ENCODE measurements at regions of chr11 and their contacts with region 1.

Region 1: GRCh38 chr11:119474682-119475596 is 52.0 kb upstream of the THY1 start:
- DNase-seq: peak; percentile 86
- H3K4me3 ChIP-seq: no peak overlapping the region; a peak in 1 of 4 replicates
- H3K27ac ChIP-seq: no peak overlapping the region
- H3K4me1 ChIP-seq: peaks cover 19 to 26% of the 10 kb centered on the region in 2 experiments; a peak in 3 of 4 replicates
- H3K27me3 ChIP-seq: 0 out of 2 replicates have a peak, but pooled peaks cover 6% of the 10 kb centered on the region
- CTCF ChIP-seq: peak; percentile 96
- EP300 ChIP-seq: no peak
- RAD21 ChIP-seq: peak; percentile 98

Region 2: GRCh38 chr11:118928108-118928870 is 546.6 kb before region 1 on chr11:
- CTCF ChIA-PET with region 1: no interaction called
- POLR2A ChIA-PET with region 1: no interaction called
- DNase-seq: peak; percentile 95
- H3K4me3 ChIP-seq: peak overlapping the region; percentile 80 to 99
- H3K27ac ChIP-seq: peak overlapping the region; percentile 91 to 93
- H3K4me1 ChIP-seq: peaks cover 9 to 33% of the 10 kb centered on the region in 2 experiments; a peak in 3 of 4 replicates
- H3K27me3 ChIP-seq: no peaks in the 10 kb centered on the region
- CTCF ChIP-seq: peak; percentile 94
- EP300 ChIP-seq: no peak
- RAD21 ChIP-seq: peak; percentile 75

Region 3: DNA sequence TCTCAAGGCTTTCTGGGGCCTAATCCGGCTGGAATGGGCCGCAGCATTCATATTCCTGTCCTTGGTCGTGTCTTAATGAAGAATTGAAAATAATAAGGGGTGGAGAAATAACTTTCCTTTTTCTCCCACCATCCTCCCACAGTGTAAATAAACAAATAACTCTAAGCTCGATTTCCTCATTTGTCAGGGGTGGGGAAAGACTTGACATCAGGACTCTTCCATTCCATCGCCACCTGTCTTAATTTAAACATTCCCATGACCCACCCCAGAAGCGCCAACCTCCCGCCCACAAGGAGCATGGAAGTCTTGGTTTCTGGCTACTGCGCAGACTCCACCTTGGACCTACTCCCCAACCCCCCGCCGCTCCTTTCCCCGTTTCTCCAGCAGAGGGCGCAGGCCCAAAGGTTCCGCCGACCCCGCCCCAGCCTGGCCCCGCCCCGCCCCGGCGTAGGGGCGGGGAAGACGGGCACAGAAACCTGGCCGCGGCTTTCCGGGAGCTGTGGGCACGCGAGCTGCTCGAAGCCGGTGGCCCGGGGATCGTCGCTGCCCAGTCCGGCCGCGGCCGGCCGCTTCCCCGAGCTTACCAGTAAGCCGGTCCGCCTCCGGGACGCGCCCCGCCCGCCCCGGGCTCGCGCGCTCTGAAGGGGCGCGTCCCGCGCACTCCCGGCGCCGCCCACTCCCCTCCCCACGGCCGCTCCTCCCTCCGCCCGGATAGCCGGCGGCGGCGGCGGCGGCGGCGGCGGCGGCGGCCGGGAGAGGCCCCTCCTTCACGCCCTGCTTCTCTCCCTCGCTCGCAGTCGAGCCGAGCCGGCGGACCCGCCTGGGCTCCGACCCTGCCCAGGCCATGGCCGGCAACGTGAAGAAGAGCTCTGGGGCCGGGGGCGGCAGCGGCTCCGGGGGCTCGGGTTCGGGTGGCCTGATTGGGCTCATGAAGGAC is 269.1 kb before region 1 on chr11 and contains the start of gene CBL:
- CTCF ChIA-PET with region 1: interaction called, 10 read pairs
- POLR2A ChIA-PET with region 1: no interaction called
- DNase-seq: peak; percentile 98
- H3K4me3 ChIP-seq: peak within 1 kb of the TSS; percentile 78 to 99
- H3K27ac ChIP-seq: peak within 1 kb of the TSS; percentile 90
- H3K4me1 ChIP-seq: peaks cover 5 to 7% of the 10 kb centered on the region in 2 experiments; a peak in 3 of 4 replicates
- H3K27me3 ChIP-seq: no peaks in the 10 kb centered on the region
- CTCF ChIP-seq: peak; percentile 78
- EP300 ChIP-seq: peak in 1 of 2 experiments; percentile 46; a peak in 1 of 4 replicates
- RAD21 ChIP-seq: peak; percentile 57
- polyA plus RNA-seq, gene CBL: 9.5 and 10.4 TPM in 2 replicates

Region 4: GRCh38 chr11:119356349-119357031 is 118.4 kb before region 1 on chr11:
- CTCF ChIA-PET with region 1: interaction called, 114 read pairs
- POLR2A ChIA-PET with region 1: no interaction called
- DNase-seq: peak; percentile 95
- H3K4me3 ChIP-seq: peak overlapping the region; percentile 42 to 79
- H3K27ac ChIP-seq: peak overlapping the region in 1 of 2 experiments; percentile 26; a peak in 1 of 4 replicates
- H3K4me1 ChIP-seq: peaks cover 8 to 22% of the 10 kb centered on the region in 2 experiments; a peak in 3 of 4 replicates
- H3K27me3 ChIP-seq: no peaks in the 10 kb centered on the region
- CTCF ChIP-seq: peak; percentile 96
- EP300 ChIP-seq: no peak
- RAD21 ChIP-seq: peak; percentile 78

Region 5: DNA sequence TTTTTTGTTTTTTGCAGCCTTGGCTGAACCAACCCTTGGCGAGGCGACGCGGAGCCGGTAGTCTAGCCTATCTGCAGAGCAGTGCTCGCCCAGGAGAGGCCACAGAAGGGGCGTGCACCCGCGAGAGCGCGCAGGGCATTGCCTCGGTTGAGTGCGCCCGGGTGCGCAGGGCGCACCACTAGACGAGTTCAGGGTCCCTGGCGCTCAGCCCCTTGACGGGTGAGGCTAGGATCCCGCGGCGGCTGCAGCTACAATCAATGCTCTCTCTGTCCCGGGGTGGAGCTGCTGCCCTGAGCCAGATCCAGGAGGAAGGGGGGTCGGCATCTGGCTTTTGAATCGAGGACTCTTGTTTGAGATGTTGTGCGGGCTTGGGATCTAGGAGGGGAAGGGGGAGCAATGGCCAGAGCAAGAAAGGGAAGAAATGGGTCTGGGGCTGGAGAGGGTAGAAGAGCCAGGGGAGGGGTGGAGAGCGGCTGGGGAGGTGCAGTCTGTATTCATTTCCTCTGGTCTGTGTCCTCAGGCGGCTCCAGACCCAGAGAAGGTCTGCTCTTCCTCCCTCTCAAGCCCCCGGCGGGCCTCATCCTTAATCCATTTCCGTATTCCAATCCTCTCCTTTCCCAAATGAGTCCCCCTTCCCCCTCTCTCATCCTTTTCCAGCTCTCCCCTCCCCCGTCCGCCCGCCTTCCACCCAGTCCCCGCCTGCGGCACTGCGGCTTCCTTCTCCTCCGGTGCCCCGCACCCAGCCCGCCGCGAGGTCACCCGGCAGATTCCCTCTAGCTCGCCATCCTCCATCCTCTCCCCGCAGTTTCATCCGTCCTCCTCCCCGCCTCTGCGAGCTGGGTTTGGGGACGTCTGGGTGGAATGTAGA is 52.8 kb before region 1 on chr11:
- CTCF ChIA-PET with region 1: interaction called, 60 read pairs
- POLR2A ChIA-PET with region 1: interaction called, 5 read pairs
- DNase-seq: peak; percentile 79
- H3K4me3 ChIP-seq: peak overlapping the region; percentile 87 to 96
- H3K27ac ChIP-seq: peak overlapping the region; percentile 70 to 89
- H3K4me1 ChIP-seq: peaks cover 22 to 63% of the 10 kb centered on the region in 2 experiments
- H3K27me3 ChIP-seq: no peaks in the 10 kb centered on the region
- CTCF ChIP-seq: no peak
- EP300 ChIP-seq: no peak
- RAD21 ChIP-seq: no peak

Region 6: DNA sequence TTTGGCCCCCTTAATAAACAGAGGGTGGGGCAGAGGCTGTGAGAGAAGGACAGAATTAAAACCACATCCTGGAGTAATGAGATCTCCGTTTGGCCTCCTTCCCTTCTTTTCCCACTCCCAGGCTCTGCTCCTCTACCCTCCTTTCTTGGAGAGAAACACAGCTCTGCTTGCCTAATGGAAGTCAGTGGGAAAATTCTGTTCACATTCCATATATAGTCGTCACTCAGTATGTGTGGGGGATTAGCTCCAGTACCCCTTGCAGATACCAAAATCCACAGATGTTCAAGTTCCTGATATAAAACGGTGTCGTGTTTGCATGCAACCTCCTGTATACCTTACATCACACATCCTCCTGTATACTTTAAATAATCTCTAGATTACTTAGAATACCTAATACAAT is 14.4 kb before region 1 on chr11:
- CTCF ChIA-PET with region 1: interaction called, 29 read pairs
- POLR2A ChIA-PET with region 1: no interaction called
- DNase-seq: no peak
- H3K4me3 ChIP-seq: no peak overlapping the region
- H3K27ac ChIP-seq: peak overlapping the region in 1 of 2 experiments; percentile 79; a peak in 2 of 4 replicates
- H3K4me1 ChIP-seq: peaks cover 10 to 19% of the 10 kb centered on the region in 2 experiments; a peak in 3 of 4 replicates
- H3K27me3 ChIP-seq: no peaks in the 10 kb centered on the region
- CTCF ChIP-seq: no peak
- EP300 ChIP-seq: no peak
- RAD21 ChIP-seq: no peak

Region 7: DNA sequence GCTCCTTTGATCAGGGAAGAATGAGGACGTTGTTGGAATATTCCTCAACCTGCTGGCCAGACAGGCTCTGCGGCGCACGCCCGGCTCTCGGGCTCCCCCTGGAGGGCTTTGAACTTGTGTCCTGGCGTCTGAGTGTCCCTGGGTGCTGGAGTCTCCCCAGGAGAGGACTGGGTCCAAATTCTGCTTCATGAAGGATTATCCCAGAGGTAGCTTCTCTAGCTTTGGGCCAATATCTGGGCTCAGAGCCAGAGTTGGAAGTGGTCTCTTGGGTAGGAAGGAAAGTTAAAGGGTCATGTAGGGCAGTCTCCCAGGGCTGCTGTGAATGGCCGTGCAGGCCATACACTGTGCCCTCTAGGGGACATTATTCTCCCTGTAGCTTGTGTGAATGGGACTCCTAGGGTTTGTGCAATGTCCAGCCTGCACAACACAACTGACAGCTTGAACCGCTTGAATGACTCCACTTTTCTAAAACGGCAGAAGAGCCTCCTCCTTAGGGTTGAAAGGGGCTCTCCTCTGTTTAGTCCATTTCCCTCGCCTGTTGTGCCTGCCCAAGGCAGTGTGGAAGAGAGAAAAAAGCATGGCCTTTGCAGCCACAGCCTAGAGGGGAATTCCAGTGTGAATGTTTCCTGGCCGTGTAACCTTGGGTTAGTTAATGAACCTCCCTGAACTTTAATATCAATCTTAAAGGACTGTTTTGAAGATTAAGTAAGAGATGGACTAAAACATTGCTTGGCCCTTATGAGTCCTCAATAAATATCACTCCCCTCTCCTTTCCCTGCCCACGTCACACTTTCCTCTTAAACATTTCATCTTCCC is 59.2 kb after region 1 on chr11:
- CTCF ChIA-PET with region 1: interaction called, 40 read pairs
- POLR2A ChIA-PET with region 1: no interaction called
- DNase-seq: peak; percentile 81
- H3K4me3 ChIP-seq: peak overlapping the region in 1 of 2 experiments; percentile 14; a peak in 1 of 4 replicates
- H3K27ac ChIP-seq: no peak overlapping the region
- H3K4me1 ChIP-seq: no peaks in the 10 kb centered on the region; a peak in 1 of 4 replicates
- H3K27me3 ChIP-seq: peaks cover 19% of the 10 kb centered on the region; the same call in 1 of the 2 replicates
- CTCF ChIP-seq: peak; percentile 90
- EP300 ChIP-seq: no peak
- RAD21 ChIP-seq: peak; percentile 69